Mucosa of descending colon (tissue), 3 donors: ENCODE measurements at regions of chr3 and their contacts with region 1.

Region 1: GRCh38 chr3:112979240-112979832 is 4.4 kb upstream of the CD200R1 start:
- DNase-seq: peak in 1 of 3 donors; percentile 49
- ATAC-seq: no peak
- H3K4me3 ChIP-seq: no peak overlapping the region
- H3K4me1 ChIP-seq: no peaks in the 10 kb centered on the region
- CTCF ChIP-seq: peak; percentile 48

Region 2: GRCh38 chr3:112473212-112473640 is 506.1 kb before region 1 on chr3:
- intact Hi-C with region 1: no loop called
- DNase-seq: no peak
- ATAC-seq: peak; percentile 55
- H3K4me3 ChIP-seq: no peak overlapping the region
- H3K4me1 ChIP-seq: no peaks in the 10 kb centered on the region
- CTCF ChIP-seq: no peak

Region 3: DNA sequence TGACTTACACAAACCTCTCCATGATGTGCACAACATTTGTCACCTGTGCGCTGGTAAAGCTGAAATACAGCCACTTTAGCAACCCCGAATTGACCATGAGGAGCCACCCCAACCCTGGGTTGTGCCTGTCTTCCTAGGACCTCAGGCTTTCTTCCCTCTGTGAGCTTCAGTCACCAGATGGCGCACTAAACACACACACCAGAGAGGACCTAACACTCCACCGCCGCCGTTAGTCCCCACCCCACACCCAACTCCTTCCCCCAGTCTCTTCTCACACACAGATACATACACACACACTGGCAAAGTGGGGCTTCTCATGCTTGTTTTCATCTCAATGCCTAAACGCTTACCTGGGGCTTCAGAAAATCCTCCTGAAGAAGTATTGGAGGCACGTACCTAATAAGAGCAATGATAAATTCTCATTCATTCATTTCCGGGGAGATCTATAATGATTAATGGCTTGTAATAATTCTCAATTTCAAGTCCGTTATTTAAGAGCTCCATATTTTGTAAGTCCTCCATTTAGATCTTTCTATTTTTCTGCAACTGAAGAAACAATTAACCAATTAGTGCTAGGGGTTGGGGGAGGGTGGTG is 336.3 kb before region 1 on chr3:
- intact Hi-C with region 1: loop called (anchors 10 kb)
- DNase-seq: peak; percentile 63 to 91 (median 70)
- ATAC-seq: peak; percentile 88
- H3K4me3 ChIP-seq: no peak overlapping the region
- H3K4me1 ChIP-seq: no peaks in the 10 kb centered on the region
- CTCF ChIP-seq: no peak

Region 4: GRCh38 chr3:112734718-112735350 is 244.5 kb before region 1 on chr3:
- intact Hi-C with region 1: loop called (anchors 5 to 10 kb)
- DNase-seq: peak in 2 of 3 donors; percentile 27 to 87
- ATAC-seq: peak; percentile 73
- H3K4me3 ChIP-seq: no peak overlapping the region
- H3K4me1 ChIP-seq: no peaks in the 10 kb centered on the region
- CTCF ChIP-seq: peak; percentile 43